Activated T-helper 1 cell treated with anti-CD3 and anti-CD28 coated beads, Interleukin-12 subunit alpha, Interleukin-12 subunit beta, Interleukin-2, Interleukin-4 antibody, amounts not matched to agents 30 ng/mL and 10 ng/mL and 1 ng/mL, durations not matched to agents 14 hours and 24 hours and 36 hours (primary cell): ENCODE measurements at regions of chr16 and their contacts with region 1.

Region 1: DNA sequence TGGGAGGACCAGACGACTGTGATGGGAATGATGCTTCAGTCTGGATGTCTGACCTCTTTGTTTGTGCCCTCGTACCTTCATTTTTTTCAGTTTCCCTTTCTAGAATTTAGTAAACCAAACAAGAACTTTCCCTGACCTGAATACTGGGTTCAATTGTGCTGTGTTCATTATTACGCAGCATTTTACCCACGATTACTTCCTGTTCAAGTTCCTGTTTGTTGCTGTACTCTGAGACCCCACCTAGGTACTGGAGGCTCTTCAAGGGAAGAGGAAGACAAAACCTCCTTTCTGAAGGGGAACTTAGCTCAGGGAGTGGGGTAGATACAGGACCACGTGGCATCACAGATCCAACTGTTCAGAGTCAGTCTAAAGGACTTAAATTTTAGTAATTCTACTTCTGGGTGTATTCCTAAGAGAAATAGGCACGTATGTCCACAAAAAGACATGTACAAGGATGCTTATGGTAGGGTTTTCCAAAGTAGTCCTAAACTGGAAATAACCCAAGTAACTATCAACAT is 9.2 kb upstream of the PRKCB start:
- DNase-seq: no peak
- H3K4me3 Mint-ChIP-seq: peak overlapping the region; percentile 15
- H3K27ac Mint-ChIP-seq: peak overlapping the region; percentile 52
- H3K4me1 Mint-ChIP-seq: peaks cover 34% of the 10 kb centered on the region
- H3K27me3 Mint-ChIP-seq: peaks cover 2% of the 10 kb centered on the region

Region 2: GRCh38 chr16:23670137-23670776 is 156.3 kb before region 1 on chr16:
- intact Hi-C with region 1: loop called (anchors 1 kb)
- DNase-seq: peak; percentile 62
- H3K4me3 Mint-ChIP-seq: no peak overlapping the region
- H3K27ac Mint-ChIP-seq: peak overlapping the region; percentile 38
- H3K4me1 Mint-ChIP-seq: peaks cover 29% of the 10 kb centered on the region
- H3K27me3 Mint-ChIP-seq: no peaks in the 10 kb centered on the region

Region 3: GRCh38 chr16:23852794-23853562 is 26.4 kb after region 1 on chr16:
- intact Hi-C with region 1: loop called (anchors 1 kb)
- DNase-seq: no peak
- H3K4me3 Mint-ChIP-seq: no peak overlapping the region
- H3K27ac Mint-ChIP-seq: no peak overlapping the region
- H3K4me1 Mint-ChIP-seq: peaks cover 79% of the 10 kb centered on the region
- H3K27me3 Mint-ChIP-seq: no peaks in the 10 kb centered on the region

Region 4: GRCh38 chr16:23863511-23864422 is 37.2 kb after region 1 on chr16:
- intact Hi-C with region 1: loop called (anchors 1 kb)
- DNase-seq: peak; percentile 30
- H3K4me3 Mint-ChIP-seq: peak overlapping the region; percentile 84
- H3K27ac Mint-ChIP-seq: peak overlapping the region; percentile 91
- H3K4me1 Mint-ChIP-seq: peaks cover 82% of the 10 kb centered on the region
- H3K27me3 Mint-ChIP-seq: no peaks in the 10 kb centered on the region

Region 5: GRCh38 chr16:23877107-23878090 is 50.8 kb after region 1 on chr16:
- intact Hi-C with region 1: loop called (anchors 1 kb)
- DNase-seq: no peak
- H3K4me3 Mint-ChIP-seq: no peak overlapping the region
- H3K27ac Mint-ChIP-seq: no peak overlapping the region
- H3K4me1 Mint-ChIP-seq: peaks cover 79% of the 10 kb centered on the region
- H3K27me3 Mint-ChIP-seq: no peaks in the 10 kb centered on the region

Region 6: GRCh38 chr16:23959072-23959751 is 132.6 kb after region 1 on chr16:
- intact Hi-C with region 1: loop called (anchors 5 kb)
- DNase-seq: no peak
- H3K4me3 Mint-ChIP-seq: peak overlapping the region; percentile 54
- H3K27ac Mint-ChIP-seq: peak overlapping the region; percentile 82
- H3K4me1 Mint-ChIP-seq: peaks cover 66% of the 10 kb centered on the region
- H3K27me3 Mint-ChIP-seq: no peaks in the 10 kb centered on the region

Region 7: DNA sequence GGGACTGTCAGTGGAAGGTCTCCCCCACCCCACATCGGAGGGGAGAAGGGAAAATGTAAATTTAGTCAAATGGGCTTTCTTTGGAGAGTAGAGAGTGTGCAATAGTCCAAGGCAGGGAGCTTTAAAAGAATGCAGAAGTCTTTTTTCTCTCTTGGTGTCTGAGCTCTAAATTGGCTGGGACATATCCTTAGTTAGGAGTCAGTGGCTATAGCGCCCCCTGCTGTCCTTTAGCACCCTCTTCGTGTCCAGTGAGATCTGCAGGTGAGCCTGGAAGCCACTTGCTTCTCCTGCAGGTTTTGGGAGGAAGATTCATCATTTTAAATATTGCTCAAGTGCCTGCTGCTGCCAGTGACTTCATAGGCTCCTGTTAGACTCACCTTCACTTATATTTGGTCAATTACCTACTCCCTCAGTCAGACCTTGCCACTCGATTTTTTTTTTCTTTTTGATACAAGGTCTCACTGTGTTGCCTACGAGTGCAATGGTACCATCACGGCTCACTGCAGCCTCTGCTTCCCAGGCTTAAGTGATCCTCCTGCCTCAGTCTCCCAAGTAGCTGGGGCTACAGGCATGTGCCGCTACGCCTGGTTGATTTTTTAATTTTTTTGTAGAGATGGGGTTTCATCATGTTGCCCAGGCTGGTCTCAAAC is 184.0 kb after region 1 on chr16:
- intact Hi-C with region 1: loop called (anchors 1 kb)
- DNase-seq: peak; percentile 63
- H3K4me3 Mint-ChIP-seq: no peak overlapping the region
- H3K27ac Mint-ChIP-seq: no peak overlapping the region
- H3K4me1 Mint-ChIP-seq: peaks cover 41% of the 10 kb centered on the region
- H3K27me3 Mint-ChIP-seq: no peaks in the 10 kb centered on the region

Region 8: GRCh38 chr16:24430945-24431760 is 604.6 kb after region 1 on chr16:
- intact Hi-C with region 1: no loop called
- DNase-seq: no peak
- H3K4me3 Mint-ChIP-seq: no peak overlapping the region
- H3K27ac Mint-ChIP-seq: no peak overlapping the region
- H3K4me1 Mint-ChIP-seq: no peaks in the 10 kb centered on the region
- H3K27me3 Mint-ChIP-seq: peaks cover 3% of the 10 kb centered on the region